MCF 10A (cell line): ENCODE measurements at regions of chr17 and their contacts with region 1.

Region 1: DNA sequence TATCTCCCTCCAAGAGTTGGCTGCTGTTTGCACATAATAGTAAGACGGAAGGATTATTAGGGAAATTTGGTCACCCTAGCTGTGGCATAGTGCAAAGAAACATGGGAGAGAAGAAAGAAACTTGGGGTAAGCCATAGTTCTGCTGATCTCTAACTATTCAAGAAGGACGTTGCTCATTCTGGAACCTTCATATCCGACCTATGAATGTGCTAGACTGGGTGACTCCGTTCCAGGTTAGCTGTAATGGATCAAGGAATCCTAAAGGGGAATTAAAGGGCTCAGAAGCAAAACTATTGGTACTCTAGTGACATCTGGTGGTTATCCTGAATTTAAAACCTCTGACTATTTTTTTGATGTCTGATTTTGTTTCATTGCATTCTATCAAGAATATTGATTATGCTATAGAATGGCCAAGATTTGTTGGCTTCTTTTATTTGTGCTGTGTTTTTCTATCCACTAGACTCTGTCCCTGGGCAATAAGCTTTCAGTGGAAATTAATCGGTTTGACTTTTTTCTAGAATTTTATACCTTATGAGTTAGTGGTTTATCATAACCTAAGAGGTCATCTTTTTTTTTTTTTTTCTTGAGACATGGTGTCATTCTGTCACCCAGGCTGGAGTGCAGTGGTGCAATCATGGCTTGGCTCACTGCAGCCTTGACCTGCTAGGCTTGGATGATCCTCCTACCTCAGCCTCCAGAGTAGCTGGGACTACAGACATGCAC is 19.5 kb downstream of the PCTP start:
- DNase-seq: peak; percentile 74
- H3K4me3 Mint-ChIP-seq: no peak overlapping the region
- H3K27ac Mint-ChIP-seq: no peak overlapping the region
- H3K4me1 Mint-ChIP-seq: peaks cover 27% of the 10 kb centered on the region
- H3K27me3 Mint-ChIP-seq: no peaks in the 10 kb centered on the region
- CTCF ChIP-seq: peak; percentile 62

Region 2: GRCh38 chr17:55587608-55588139 is 182.6 kb before region 1 on chr17:
- CTCF ChIA-PET with region 1: no interaction called
- POLR2A ChIA-PET with region 1: no interaction called
- intact Hi-C with region 1: loop called (anchors 5 kb)
- DNase-seq: no peak
- H3K4me3 Mint-ChIP-seq: no peak overlapping the region
- H3K27ac Mint-ChIP-seq: peak overlapping the region; percentile 52
- H3K4me1 Mint-ChIP-seq: peaks cover 23% of the 10 kb centered on the region
- H3K27me3 Mint-ChIP-seq: no peaks in the 10 kb centered on the region
- CTCF ChIP-seq: no peak

Region 3: GRCh38 chr17:55717898-55718735 is 52.2 kb before region 1 on chr17:
- CTCF ChIA-PET with region 1: interaction called, 77 read pairs
- POLR2A ChIA-PET with region 1: interaction called, 5 read pairs
- intact Hi-C with region 1: loop called (anchors 1 kb)
- DNase-seq: peak; percentile 80
- H3K4me3 Mint-ChIP-seq: no peak overlapping the region
- H3K27ac Mint-ChIP-seq: no peak overlapping the region
- H3K4me1 Mint-ChIP-seq: peaks cover 10% of the 10 kb centered on the region
- H3K27me3 Mint-ChIP-seq: no peaks in the 10 kb centered on the region
- CTCF ChIP-seq: peak; percentile 62

Region 4: GRCh38 chr17:55735731-55736405 is 34.4 kb before region 1 on chr17:
- CTCF ChIA-PET with region 1: interaction called, 14 read pairs
- POLR2A ChIA-PET with region 1: no interaction called
- intact Hi-C with region 1: no loop called
- DNase-seq: peak; percentile 69
- H3K4me3 Mint-ChIP-seq: no peak overlapping the region
- H3K27ac Mint-ChIP-seq: no peak overlapping the region
- H3K4me1 Mint-ChIP-seq: peaks cover 41% of the 10 kb centered on the region
- H3K27me3 Mint-ChIP-seq: no peaks in the 10 kb centered on the region
- CTCF ChIP-seq: peak; percentile 50

Region 5: DNA sequence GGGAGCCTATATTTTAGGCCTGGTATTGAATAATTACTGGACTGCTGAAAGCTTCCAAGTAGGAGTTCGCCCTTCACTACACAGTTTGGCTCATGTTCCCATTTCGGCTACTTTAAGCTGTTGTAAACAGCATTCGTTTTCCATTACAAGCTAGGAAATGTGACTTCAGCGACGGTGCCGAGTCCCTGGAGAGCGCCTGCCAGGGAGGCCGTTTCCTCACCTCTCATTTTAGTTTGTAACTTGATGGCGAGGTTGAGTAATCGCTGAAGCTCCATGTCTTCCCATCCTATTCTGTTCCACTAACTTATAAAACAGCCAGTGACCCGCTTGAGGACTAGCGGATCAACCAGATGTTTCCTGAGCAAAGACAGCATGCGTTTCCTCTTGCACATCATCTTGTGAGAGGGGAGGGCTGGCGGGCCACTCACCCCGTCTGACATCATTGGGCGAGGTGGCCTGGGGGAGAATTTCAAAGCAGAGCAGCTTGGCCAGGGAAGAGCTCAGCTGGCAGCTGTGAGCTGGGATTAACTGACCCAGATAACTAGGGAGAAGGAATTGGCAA is 13.5 kb after region 1 on chr17:
- CTCF ChIA-PET with region 1: interaction called, 52 read pairs
- POLR2A ChIA-PET with region 1: no interaction called
- intact Hi-C with region 1: no loop called
- DNase-seq: peak; percentile 41
- H3K4me3 Mint-ChIP-seq: no peak overlapping the region
- H3K27ac Mint-ChIP-seq: no peak overlapping the region
- H3K4me1 Mint-ChIP-seq: no peaks in the 10 kb centered on the region
- H3K27me3 Mint-ChIP-seq: no peaks in the 10 kb centered on the region
- CTCF ChIP-seq: no peak

Region 6: DNA sequence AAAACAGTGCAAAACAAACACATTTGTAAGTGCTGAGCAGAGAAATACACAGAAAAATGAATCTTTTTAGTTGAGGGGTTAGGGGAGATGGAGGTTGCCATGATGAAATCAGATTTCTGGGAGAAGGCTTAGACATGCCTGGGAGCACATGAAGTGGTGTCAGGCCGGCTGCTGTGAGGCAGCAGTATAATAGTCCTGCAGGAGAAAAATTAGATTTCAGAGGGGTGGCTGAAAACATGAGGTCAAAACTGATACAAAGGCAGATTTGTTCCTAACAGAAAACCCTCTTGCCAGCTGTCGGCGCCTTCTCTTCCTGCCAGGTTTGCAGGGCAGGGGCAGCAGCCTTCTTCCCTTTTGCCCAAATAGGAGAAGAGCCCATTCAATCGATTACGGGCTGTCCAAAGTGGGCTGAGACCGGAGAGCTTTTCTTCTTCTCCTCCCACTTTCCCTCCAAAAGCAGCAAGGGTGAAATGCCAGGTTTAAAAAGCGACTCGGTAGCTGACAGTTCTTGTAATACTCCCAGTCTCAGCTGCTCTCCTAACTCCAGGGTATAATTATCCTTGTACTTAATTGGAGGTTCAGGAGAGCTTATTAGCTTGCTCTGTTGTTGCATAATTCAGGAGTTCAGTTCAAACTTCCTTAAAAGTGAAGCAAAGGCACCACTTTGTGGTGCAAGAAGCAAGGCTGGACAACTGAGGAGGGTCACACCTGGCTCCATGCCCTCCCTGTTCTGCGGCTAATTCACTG is 60.6 kb after region 1 on chr17:
- CTCF ChIA-PET with region 1: interaction called, 14 read pairs
- POLR2A ChIA-PET with region 1: no interaction called
- intact Hi-C with region 1: no loop called
- DNase-seq: no peak
- H3K4me3 Mint-ChIP-seq: no peak overlapping the region
- H3K27ac Mint-ChIP-seq: no peak overlapping the region
- H3K4me1 Mint-ChIP-seq: no peaks in the 10 kb centered on the region
- H3K27me3 Mint-ChIP-seq: peaks cover 10% of the 10 kb centered on the region
- CTCF ChIP-seq: no peak

Region 7: DNA sequence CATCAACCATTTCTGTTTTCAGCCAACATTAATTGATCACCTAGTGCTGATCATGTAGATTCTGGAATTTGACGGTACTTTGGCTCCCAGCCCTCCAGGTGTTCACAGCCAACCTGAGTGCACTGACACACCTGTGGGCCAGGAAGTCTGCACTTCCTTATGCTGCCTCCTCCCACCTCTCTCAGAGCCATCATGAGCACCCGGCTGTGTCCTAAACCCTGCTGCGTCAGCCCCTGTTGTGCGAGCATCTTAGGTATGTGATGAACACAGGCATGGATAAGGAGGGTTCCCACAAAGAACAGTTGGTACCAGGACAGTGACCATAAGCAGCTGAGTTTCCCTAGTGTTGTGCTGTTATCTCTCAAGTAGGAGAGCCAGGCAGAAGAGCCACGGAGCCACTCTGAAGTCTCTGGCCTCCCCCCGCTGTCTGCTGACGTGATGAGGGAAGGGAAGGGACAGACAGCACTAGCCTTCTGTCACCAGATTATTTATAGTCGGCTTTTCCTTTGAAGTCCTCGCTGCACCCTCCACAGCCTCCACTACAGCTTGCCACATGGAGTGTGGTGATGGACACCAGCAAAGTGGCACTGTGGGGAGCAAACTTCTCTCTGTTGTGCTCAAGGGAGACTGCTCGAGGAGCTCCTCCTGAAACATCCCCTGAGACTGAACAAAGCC is 220.2 kb after region 1 on chr17:
- CTCF ChIA-PET with region 1: no interaction called
- POLR2A ChIA-PET with region 1: no interaction called
- intact Hi-C with region 1: no loop called
- DNase-seq: no peak
- H3K4me3 Mint-ChIP-seq: no peak overlapping the region
- H3K27ac Mint-ChIP-seq: no peak overlapping the region
- H3K4me1 Mint-ChIP-seq: no peaks in the 10 kb centered on the region
- H3K27me3 Mint-ChIP-seq: no peaks in the 10 kb centered on the region
- CTCF ChIP-seq: no peak